Activated naive CD4-positive, alpha-beta T cell treated with anti-CD3 and anti-CD28 coated beads, Interleukin-2, amount 10 ng/mL, durations not matched to agents 7 days and 5 days (primary cell): ENCODE measurements at regions of chr2 and their contacts with region 1.

Region 1: GRCh38 chr2:74482801-74483674 is at the starts of genes CCDC142 and TTC31:
- DNase-seq: peak; percentile 96
- H3K4me3 Mint-ChIP-seq: peak within 1 kb of the TSS; percentile 100
- H3K27ac Mint-ChIP-seq: peak within 1 kb of the TSS; percentile 98
- H3K4me1 Mint-ChIP-seq: peaks cover 51% of the 10 kb centered on the region
- H3K27me3 Mint-ChIP-seq: no peaks in the 10 kb centered on the region

Region 2: GRCh38 chr2:74147727-74148456 is 335.1 kb before region 1 on chr2 and contains the start of gene BOLA3:
- CTCF ChIA-PET with region 1: no interaction called
- DNase-seq: peak; percentile 89
- H3K4me3 Mint-ChIP-seq: no peak within 1 kb of the TSS
- H3K27ac Mint-ChIP-seq: no peak within 1 kb of the TSS
- H3K4me1 Mint-ChIP-seq: peaks cover 8% of the 10 kb centered on the region
- H3K27me3 Mint-ChIP-seq: no peaks in the 10 kb centered on the region

Region 3: DNA sequence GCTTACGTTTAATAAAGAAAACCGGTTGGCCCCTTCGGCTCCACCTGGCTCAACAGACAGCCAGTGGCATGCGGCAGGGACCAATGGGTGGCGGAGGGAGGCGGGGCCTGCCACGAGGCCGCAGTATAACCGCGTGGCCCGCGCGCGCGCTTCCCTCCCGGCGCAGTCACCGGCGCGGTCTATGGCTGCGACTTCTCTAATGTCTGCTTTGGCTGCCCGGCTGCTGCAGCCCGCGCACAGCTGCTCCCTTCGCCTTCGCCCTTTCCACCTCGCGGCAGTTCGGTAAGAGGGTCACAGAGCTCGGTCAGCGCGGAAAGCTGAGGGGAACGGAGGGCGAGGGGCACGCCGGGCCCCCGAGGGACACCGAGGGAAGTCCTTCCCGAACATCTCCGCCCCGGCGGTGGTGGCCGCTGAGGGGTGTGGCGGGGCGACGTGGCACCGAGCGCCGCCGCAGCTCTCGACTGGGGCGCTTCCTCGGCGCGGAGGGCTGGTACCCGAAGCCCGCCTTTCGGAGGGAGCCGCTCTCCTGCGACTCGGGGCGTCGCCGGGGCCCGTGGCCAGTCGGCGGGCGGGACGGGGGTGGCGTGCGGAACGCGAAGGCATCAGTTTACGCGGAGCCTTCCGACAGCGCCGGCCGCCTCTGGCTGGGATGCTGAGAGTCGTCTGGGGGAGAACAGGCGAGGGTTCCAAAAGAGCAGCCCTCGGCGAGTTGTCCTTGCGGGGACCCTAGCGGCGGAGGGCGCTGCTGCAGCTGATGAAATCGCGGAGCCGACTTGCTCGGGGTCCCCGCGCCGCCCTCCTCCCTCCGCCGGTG is 284.4 kb before region 1 on chr2 and contains the start of gene MTHFD2:
- CTCF ChIA-PET with region 1: no interaction called
- DNase-seq: peak; percentile 94
- H3K4me3 Mint-ChIP-seq: peak within 1 kb of the TSS; percentile 94
- H3K27ac Mint-ChIP-seq: peak within 1 kb of the TSS; percentile 99
- H3K4me1 Mint-ChIP-seq: peaks cover 55% of the 10 kb centered on the region
- H3K27me3 Mint-ChIP-seq: peaks cover 6% of the 10 kb centered on the region

Region 4: DNA sequence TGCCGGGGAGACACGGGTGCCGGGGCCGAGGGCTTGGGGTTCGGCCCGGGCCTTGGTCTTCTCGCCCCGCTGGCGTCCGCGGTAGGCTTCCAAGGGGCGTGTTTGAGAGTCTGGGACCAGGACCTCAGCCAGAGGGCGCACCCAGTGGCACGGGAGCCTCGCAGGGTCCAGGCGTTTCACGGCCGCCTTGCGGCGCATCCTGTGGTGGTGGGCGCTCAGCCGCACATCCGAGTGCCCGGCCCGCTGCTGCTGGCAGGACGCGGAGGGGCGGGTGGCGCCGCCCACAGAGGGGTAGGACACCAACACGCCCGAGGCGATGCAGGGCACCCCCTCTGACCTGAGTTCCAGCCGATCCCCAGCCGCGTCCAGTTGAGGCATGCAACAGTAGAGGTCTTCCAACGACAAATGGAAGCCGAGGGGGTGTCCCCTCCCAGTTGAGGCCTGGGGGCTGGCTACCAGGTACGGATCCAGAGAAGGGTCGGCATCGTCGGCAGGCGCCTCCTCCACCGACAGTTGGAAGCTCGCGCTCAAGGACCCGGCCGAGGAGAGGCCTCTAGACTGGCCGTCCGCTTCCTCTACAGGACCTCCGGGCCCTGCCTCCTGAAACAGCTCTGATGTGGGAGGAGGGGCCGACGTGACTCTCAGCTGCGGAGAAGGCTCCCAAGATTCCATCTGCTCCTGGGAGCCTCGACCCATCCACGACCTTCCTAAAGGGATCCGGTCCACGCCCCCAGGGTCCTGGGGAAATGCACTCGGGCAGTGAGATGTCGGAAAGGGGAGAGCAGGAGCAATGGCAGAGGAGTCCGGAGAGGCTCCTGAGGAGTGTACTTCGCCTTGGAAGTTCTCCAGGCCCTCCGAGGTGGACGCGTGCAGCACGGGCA is 67.9 kb before region 1 on chr2:
- CTCF ChIA-PET with region 1: no interaction called
- DNase-seq: peak; percentile 40
- H3K4me3 Mint-ChIP-seq: peak overlapping the region; percentile 52
- H3K27ac Mint-ChIP-seq: no peak overlapping the region
- H3K4me1 Mint-ChIP-seq: peaks cover 31% of the 10 kb centered on the region
- H3K27me3 Mint-ChIP-seq: peaks cover 54% of the 10 kb centered on the region

Region 5: GRCh38 chr2:74458132-74458925 is 24.7 kb before region 1 on chr2 and contains the start of gene WBP1:
- CTCF ChIA-PET with region 1: interaction called, 25 read pairs
- DNase-seq: peak; percentile 100
- H3K4me3 Mint-ChIP-seq: peak within 1 kb of the TSS; percentile 92
- H3K27ac Mint-ChIP-seq: peak within 1 kb of the TSS; percentile 98
- H3K4me1 Mint-ChIP-seq: peaks cover 64% of the 10 kb centered on the region
- H3K27me3 Mint-ChIP-seq: no peaks in the 10 kb centered on the region

Region 6: DNA sequence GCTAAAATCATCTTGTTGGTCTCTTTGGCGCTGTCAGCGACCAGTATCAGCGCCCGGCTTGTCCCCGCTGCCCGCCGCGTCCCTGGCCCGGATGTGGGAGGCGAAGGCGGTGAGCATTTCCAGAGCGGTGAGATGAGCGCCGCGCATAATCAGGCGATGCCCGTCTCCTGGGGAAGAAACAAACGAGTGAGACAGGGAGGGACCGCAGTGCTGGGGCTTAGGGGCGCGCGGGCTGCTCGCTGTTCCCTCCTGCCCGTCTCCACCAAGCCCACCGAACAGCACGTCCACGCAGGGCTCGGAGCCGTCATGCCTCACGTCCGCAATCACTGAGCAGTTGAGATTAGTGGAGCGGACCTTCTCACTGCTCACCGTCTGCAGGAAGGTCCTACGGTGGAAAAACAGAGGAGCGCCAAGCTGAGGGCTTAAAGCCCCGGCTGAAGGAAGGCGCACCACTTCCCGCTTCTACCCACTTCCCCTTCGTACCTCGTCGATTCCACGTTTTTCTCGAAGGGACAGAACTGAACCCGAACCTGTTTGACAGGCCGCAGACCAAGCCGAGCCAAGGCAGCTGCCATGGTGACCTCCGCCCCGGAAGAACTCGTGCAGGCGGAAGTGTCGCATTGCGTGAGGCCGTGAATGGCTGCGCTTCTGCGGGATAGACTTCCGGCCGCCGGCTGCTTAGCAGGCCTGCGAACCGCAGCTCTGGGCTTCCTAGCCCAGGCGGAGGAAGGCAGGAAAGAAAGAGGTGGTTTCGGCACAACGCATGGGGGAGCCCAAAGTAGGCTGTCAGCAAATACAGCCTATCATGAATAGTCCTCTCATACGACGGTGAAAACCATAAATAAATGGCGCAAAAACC is 10.7 kb before region 1 on chr2 and contains the start of gene MRPL53:
- CTCF ChIA-PET with region 1: interaction called, 27 read pairs
- DNase-seq: peak; percentile 97
- H3K4me3 Mint-ChIP-seq: peak within 1 kb of the TSS; percentile 96
- H3K27ac Mint-ChIP-seq: peak within 1 kb of the TSS; percentile 99
- H3K4me1 Mint-ChIP-seq: peaks cover 40% of the 10 kb centered on the region
- H3K27me3 Mint-ChIP-seq: peaks cover 7% of the 10 kb centered on the region

Region 7: GRCh38 chr2:74502720-74503505 is 19.9 kb after region 1 on chr2:
- CTCF ChIA-PET with region 1: interaction called, 11 read pairs
- DNase-seq: peak; percentile 57
- H3K4me3 Mint-ChIP-seq: peak overlapping the region; percentile 61
- H3K27ac Mint-ChIP-seq: no peak overlapping the region
- H3K4me1 Mint-ChIP-seq: peaks cover 72% of the 10 kb centered on the region
- H3K27me3 Mint-ChIP-seq: peaks cover 80% of the 10 kb centered on the region

Region 8: GRCh38 chr2:74529357-74530238 is 46.6 kb after region 1 on chr2 and contains the starts of genes AUP1 and HTRA2:
- CTCF ChIA-PET with region 1: interaction called, 86 read pairs
- DNase-seq: peak; percentile 94
- H3K4me3 Mint-ChIP-seq: peak within 1 kb of the TSS; percentile 96
- H3K27ac Mint-ChIP-seq: peak within 1 kb of the TSS; percentile 94
- H3K4me1 Mint-ChIP-seq: peaks cover 51% of the 10 kb centered on the region
- H3K27me3 Mint-ChIP-seq: no peaks in the 10 kb centered on the region